ENCODE measurements at regions of chr17 and their contacts with region 1.

Region 1: GRCh38 chr17:60102632-60103096 is 23.9 kb upstream of the HEATR6 start:
- DNase-seq: no peak
- ATAC-seq: no peak
- H3K4me3 ChIP-seq: no peak overlapping the region
- H3K27ac ChIP-seq: no peak overlapping the region
- H3K4me1 ChIP-seq: no peaks in the 10 kb centered on the region
- H3K27me3 ChIP-seq: no peaks in the 10 kb centered on the region
- CTCF ChIP-seq: no peak
- POLR2A ChIP-seq: no peak
- RAD21 ChIP-seq: no peak

Region 2: GRCh38 chr17:60188759-60189158 is 86.1 kb after region 1 on chr17:
- CTCF ChIA-PET with region 1: no interaction called
- POLR2A ChIA-PET with region 1: no interaction called
- RAD21 ChIA-PET with region 1: no interaction called
- intact Hi-C with region 1: no loop called
- DNase-seq: no peak
- ATAC-seq: no peak
- H3K4me3 ChIP-seq: no peak overlapping the region
- H3K27ac ChIP-seq: no peak overlapping the region
- H3K4me1 ChIP-seq: no peaks in the 10 kb centered on the region
- H3K27me3 ChIP-seq: no peaks in the 10 kb centered on the region
- CTCF ChIP-seq: no peak
- POLR2A ChIP-seq: no peak
- RAD21 ChIP-seq: no peak

Region 3: GRCh38 chr17:60435244-60436167 is 332.8 kb after region 1 on chr17:
- CTCF ChIA-PET with region 1: no interaction called
- POLR2A ChIA-PET with region 1: no interaction called
- RAD21 ChIA-PET with region 1: no interaction called
- intact Hi-C with region 1: loop called (anchors 10 kb)
- DNase-seq: peak; percentile 79
- ATAC-seq: peak; percentile 87
- H3K4me3 ChIP-seq: no peak overlapping the region
- H3K27ac ChIP-seq: no peak overlapping the region
- H3K4me1 ChIP-seq: peaks cover 0 to 5% of the 10 kb centered on the region in 2 experiments; a peak in 2 of 4 replicates
- H3K27me3 ChIP-seq: no peaks in the 10 kb centered on the region
- CTCF ChIP-seq: peak; percentile 95 to 99 (median 97)
- POLR2A ChIP-seq: no peak
- RAD21 ChIP-seq: peak; percentile 100

Region 4: GRCh38 chr17:60641810-60642220 is 539.2 kb after region 1 on chr17:
- CTCF ChIA-PET with region 1: no interaction called
- POLR2A ChIA-PET with region 1: no interaction called
- RAD21 ChIA-PET with region 1: no interaction called
- intact Hi-C with region 1: loop called (anchors 10 kb)
- DNase-seq: peak; percentile 78
- ATAC-seq: peak; percentile 79
- H3K4me3 ChIP-seq: no peak overlapping the region
- H3K27ac ChIP-seq: no peak overlapping the region
- H3K4me1 ChIP-seq: peaks cover 4 to 6% of the 10 kb centered on the region in 2 experiments; a peak in 3 of 4 replicates
- H3K27me3 ChIP-seq: no peaks in the 10 kb centered on the region
- CTCF ChIP-seq: peak; percentile 46 to 80 (median 67); a peak in 5 of 6 replicates
- POLR2A ChIP-seq: no peak
- RAD21 ChIP-seq: peak; percentile 64

Measured in HCT116 (cell line).